ENCODE measurements at regions of chr1 and their contacts with region 1.

Region 1: GRCh38 chr1:223811634-223812415 is 33.9 kb downstream of the TP53BP2 start:
- DNase-seq: peak; percentile 49
- ATAC-seq: 0 out of 2 replicates have a peak, but pooled peaks have one; percentile 48
- H3K4me3 ChIP-seq: no peak overlapping the region
- H3K27ac ChIP-seq: no peak overlapping the region
- H3K4me1 ChIP-seq: peaks cover 2% of the 10 kb centered on the region
- H3K27me3 ChIP-seq: no peaks in the 10 kb centered on the region
- CTCF ChIP-seq: peak; percentile 57
- POLR2A ChIP-seq: no peak
- RAD21 ChIP-seq: peak; percentile 69

Region 2: GRCh38 chr1:223670458-223671168 is 141.2 kb before region 1 on chr1:
- CTCF ChIA-PET with region 1: no interaction called
- POLR2A ChIA-PET with region 1: no interaction called
- dilution Hi-C with region 1: no loop called
- in situ Hi-C with region 1: no loop called
- intact Hi-C with region 1: no loop called
- DNase-seq: peak; percentile 51
- ATAC-seq: peak; percentile 72
- H3K4me3 ChIP-seq: no peak overlapping the region
- H3K27ac ChIP-seq: no peak overlapping the region
- H3K4me1 ChIP-seq: no peaks in the 10 kb centered on the region
- H3K27me3 ChIP-seq: peaks cover 3% of the 10 kb centered on the region; the same call in 1 of the 2 replicates
- CTCF ChIP-seq: peak; percentile 40
- POLR2A ChIP-seq: no peak
- RAD21 ChIP-seq: peak; percentile 53

Region 3: DNA sequence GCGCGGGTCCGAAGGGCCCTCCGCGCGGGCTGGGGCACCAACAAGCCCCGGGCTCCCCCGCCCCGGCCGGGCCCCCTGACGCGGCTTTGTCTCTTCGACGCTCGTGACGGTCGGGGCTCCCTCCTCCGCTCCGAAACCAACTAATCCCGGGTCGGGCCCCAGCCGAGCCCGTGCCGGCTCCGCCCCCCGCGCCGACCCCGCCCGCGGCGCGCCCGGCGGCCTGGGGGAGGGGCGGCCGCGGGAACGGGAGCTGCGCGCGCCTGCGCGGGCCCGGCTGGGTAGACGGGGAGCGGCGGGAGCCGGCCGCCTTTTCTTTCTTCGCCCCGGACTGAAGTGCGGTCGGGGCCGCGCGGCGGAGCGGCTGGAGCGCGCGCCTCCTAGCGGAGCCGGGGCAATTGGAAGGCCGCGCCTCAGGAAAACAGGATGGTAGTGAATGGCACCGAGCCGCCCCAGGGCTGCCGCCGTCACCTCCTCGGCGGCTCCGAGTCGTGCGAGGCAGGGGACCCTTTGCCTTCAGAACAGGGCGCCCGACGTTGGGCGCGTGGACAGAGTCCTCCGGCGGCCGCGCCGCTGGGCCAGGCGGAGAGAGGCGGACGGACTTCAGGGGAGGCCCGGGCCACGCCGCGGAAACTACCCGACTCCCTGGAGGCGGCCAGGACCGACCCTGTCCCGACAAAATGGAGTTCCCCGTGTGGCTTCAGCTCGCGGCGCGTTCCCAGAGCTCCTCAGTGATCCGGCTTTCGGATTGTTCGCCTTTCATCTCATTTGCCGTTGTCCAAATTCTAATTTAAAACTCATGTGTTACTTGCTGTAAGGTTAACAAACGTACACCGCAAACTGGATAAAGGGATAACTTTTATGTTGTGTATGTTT is 34.2 kb after region 1 on chr1 and contains the start of gene TP53BP2:
- CTCF ChIA-PET with region 1: interaction called, 4 read pairs
- POLR2A ChIA-PET with region 1: no interaction called
- dilution Hi-C with region 1: no loop called
- in situ Hi-C with region 1: no loop called
- intact Hi-C with region 1: loop called (anchors 2 kb)
- DNase-seq: peak; percentile 87
- ATAC-seq: peak; percentile 95
- H3K4me3 ChIP-seq: peak within 1 kb of the TSS; percentile 93
- H3K27ac ChIP-seq: peak within 1 kb of the TSS; percentile 98
- H3K4me1 ChIP-seq: peaks cover 3% of the 10 kb centered on the region
- H3K27me3 ChIP-seq: no peaks in the 10 kb centered on the region
- CTCF ChIP-seq: peak; percentile 76
- POLR2A ChIP-seq: peak; percentile 86
- RAD21 ChIP-seq: peak; percentile 64
- total RNA-seq, gene TP53BP2: 35.0 and 35.8 TPM in 2 replicates

Region 4: GRCh38 chr1:224113918-224114786 is 302.3 kb after region 1 on chr1 and contains the start of gene FBXO28:
- CTCF ChIA-PET with region 1: no interaction called
- POLR2A ChIA-PET with region 1: no interaction called
- dilution Hi-C with region 1: no loop called
- in situ Hi-C with region 1: no loop called
- intact Hi-C with region 1: loop called (anchors 10 kb)
- DNase-seq: peak; percentile 95
- ATAC-seq: peak; percentile 98
- H3K4me3 ChIP-seq: peak within 1 kb of the TSS; percentile 75
- H3K27ac ChIP-seq: peak within 1 kb of the TSS; percentile 72
- H3K4me1 ChIP-seq: no peaks in the 10 kb centered on the region
- H3K27me3 ChIP-seq: no peaks in the 10 kb centered on the region
- CTCF ChIP-seq: no peak
- POLR2A ChIP-seq: peak; percentile 90
- RAD21 ChIP-seq: no peak
- total RNA-seq, gene FBXO28: 22.6 and 30.0 TPM in 2 replicates